ENCODE measurements at regions of chr4 and their contacts with region 1.

Region 1: GRCh38 chr4:36235314-36235713 is 9.0 kb downstream of the ARAP2 start:
- DNase-seq: no peak
- ATAC-seq: peak; percentile 26
- H3K4me3 ChIP-seq: no peak overlapping the region
- H3K4me3 Mint-ChIP-seq: no peak overlapping the region
- H3K27ac ChIP-seq: no peak overlapping the region
- H3K27ac Mint-ChIP-seq: peak overlapping the region; percentile 32
- H3K4me1 ChIP-seq: peaks cover 26% of the 10 kb centered on the region
- H3K4me1 Mint-ChIP-seq: peaks cover 87% of the 10 kb centered on the region
- H3K27me3 ChIP-seq: no peaks in the 10 kb centered on the region
- H3K27me3 Mint-ChIP-seq: no peaks in the 10 kb centered on the region
- CTCF ChIP-seq: no peak

Region 2: DNA sequence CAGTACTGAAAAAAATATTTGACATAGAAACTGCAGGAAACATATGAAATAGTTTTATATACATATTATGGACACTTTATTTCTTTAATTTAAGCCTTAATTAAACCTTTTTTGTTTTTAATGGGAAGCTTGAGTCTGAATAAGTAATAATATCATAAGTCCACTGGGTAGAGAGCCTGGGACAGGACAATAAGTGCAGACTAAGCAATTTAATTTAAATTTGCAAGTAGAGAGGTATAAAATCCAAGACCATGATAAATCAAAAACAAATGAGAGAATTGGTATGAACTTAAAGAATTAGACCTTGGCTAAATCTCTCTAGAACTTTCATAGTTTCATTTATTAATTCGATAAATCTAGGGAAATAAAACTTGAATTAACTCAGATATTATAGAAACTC is 562.2 kb before region 1 on chr4:
- CTCF ChIA-PET with region 1: no interaction called
- POLR2A ChIA-PET with region 1: no interaction called
- intact Hi-C with region 1: no loop called
- DNase-seq: no peak
- ATAC-seq: no peak
- H3K4me3 ChIP-seq: no peak overlapping the region
- H3K4me3 Mint-ChIP-seq: no peak overlapping the region
- H3K27ac ChIP-seq: no peak overlapping the region
- H3K27ac Mint-ChIP-seq: no peak overlapping the region
- H3K4me1 ChIP-seq: no peaks in the 10 kb centered on the region
- H3K4me1 Mint-ChIP-seq: no peaks in the 10 kb centered on the region
- H3K27me3 ChIP-seq: no peaks in the 10 kb centered on the region
- H3K27me3 Mint-ChIP-seq: no peaks in the 10 kb centered on the region
- CTCF ChIP-seq: no peak

Region 3: GRCh38 chr4:36280555-36280954 is 45.2 kb after region 1 on chr4:
- CTCF ChIA-PET with region 1: no interaction called
- POLR2A ChIA-PET with region 1: no interaction called
- intact Hi-C with region 1: loop called in 1 of 2 experiments (anchors 5 kb)
- DNase-seq: no peak
- ATAC-seq: no peak
- H3K4me3 ChIP-seq: no peak overlapping the region
- H3K4me3 Mint-ChIP-seq: no peak overlapping the region
- H3K27ac ChIP-seq: no peak overlapping the region
- H3K27ac Mint-ChIP-seq: no peak overlapping the region
- H3K4me1 ChIP-seq: peaks cover 6% of the 10 kb centered on the region
- H3K4me1 Mint-ChIP-seq: peaks cover 22% of the 10 kb centered on the region
- H3K27me3 ChIP-seq: no peaks in the 10 kb centered on the region
- H3K27me3 Mint-ChIP-seq: no peaks in the 10 kb centered on the region
- CTCF ChIP-seq: no peak

Measured in CD4-positive, alpha-beta T cell (primary cell).